BJ (cell line): ENCODE measurements at regions of chr3 and their contacts with region 1.

Region 1: DNA sequence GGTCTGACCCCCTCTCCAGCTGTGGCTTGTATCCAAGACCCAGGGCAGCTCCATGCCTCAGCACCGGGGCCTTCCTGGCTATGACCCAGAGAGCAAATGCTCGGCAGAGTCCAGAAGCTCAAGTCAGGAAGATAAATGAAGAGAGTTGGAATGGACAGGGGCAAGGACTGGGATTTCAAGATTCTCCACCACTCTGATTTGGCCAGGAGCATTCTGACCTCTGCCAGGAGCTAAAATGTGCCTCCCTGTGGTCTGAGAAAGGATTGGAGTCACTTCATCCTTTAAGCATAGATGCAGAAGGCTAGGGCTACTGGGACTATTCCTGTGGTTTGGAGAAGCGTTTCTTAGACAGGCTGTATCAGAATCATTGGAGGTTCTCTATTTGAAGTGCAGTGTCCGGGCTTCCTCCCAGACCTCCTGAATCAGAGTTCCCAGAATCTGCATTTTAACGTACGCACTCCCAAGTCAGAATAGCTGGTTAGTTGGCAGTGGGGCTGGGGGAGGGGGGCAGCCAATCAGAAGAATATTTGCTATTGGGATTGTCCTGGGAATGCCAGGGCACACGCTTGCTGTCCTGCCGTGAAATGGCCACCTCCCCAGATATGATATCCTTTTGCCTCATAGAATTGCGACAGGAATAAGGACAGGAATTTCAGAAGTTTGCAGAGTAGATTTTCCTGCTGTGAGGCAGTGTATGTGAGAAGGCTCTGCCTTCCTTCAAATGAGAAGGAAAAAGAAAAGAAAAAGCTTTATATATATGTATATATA is 57.4 kb downstream of the HRH1 start:
- DNase-seq: no peak
- H3K4me3 ChIP-seq: no peak overlapping the region
- H3K27me3 ChIP-seq: no peaks in the 10 kb centered on the region
- CTCF ChIP-seq: peak; percentile 17; the same call in 1 of the 2 replicates

Region 2: DNA sequence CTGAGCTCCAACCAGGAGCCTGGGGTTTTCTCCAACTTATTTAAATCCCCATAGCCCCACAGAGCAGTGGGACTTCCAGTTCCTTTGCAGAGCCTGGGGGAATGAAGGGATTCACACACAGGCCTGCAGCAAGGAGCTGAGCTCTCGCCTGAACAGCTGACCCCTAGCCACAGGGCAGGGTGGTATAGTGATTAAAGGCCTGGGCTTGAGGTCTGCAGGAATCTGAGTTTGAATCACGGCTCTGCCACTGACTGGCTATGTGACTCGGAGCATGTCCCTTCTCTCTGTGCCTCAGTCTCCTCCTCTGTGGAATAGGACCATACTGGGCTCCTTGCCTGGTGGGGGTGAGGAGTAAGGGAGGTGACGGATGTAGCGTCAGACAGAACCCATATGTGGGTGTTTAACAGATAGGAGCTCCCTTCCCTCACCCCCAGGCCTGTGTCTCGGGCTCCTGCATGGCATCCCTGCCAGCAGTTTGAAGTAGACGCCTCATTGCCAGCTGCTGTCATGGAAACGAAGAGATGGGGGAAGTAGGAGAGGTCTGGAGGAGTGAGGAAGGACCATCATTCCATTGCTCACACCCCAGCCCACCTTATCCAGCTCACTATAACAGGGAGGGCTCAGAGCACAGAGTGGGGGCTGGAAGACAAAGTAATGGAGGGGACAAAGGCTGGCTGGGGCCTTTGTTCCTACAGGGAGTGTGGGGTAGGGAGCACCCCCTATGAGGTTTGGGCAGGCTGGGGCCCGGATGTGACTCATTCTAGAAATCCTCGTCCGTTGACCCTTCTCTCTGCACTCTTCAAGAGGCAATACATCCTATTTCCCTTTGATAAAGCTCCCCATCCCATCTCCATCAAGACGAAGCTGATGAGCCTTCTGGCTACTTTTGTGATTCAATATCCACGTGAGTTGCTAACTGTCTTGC is 42.6 kb before region 1 on chr3:
- CTCF ChIA-PET with region 1: no interaction called
- POLR2A ChIA-PET with region 1: no interaction called
- DNase-seq: no peak
- H3K4me3 ChIP-seq: no peak overlapping the region
- H3K27me3 ChIP-seq: no peaks in the 10 kb centered on the region
- CTCF ChIP-seq: no peak

Region 3: DNA sequence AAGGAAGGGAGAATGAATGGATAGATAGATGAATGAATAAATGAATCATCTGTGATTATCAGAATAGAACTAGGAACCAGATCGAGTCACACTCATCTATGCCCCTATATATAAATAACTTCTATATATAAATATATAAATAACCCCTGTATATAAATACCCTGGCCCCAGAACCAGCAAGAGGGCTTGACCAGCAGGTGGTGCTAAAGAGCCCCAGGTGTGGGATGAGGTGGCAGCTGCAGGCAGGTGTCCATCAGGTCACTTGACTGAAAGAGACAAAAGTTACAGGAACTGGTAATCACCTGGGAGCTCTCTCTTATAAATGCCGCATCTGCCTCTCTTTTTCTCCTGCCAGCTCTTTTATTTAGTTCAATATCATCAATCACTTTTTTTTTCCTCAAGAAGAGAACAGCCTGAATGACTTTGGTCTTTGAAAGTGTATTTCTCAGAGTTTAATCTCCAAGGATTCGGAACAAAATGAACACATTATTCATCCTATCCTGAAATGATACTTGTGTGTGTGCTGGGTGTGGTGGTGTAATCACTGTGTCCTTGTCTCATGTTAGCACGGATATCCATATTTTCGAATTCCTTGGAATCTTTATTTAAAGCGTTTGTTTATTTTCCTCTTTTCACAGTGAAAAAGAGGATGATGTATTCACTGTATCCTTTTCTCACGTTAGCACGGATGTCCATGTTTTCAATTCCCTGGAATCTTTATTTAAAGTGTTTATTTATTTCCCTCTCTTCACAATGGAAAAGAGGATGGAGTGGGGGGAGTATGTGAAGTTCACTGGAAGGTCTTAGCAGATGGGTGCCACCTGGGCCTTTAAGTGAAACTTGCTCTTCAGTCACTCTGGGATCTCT is 25.1 kb after region 1 on chr3:
- CTCF ChIA-PET with region 1: interaction called, 10 read pairs
- POLR2A ChIA-PET with region 1: no interaction called
- DNase-seq: peak; percentile 71
- H3K4me3 ChIP-seq: no peak overlapping the region
- H3K27me3 ChIP-seq: no peaks in the 10 kb centered on the region
- CTCF ChIP-seq: peak; percentile 71

Region 4: GRCh38 chr3:11260460-11260859 is 48.7 kb after region 1 on chr3:
- CTCF ChIA-PET with region 1: no interaction called
- POLR2A ChIA-PET with region 1: no interaction called
- DNase-seq: no peak
- H3K4me3 ChIP-seq: no peak overlapping the region
- H3K27me3 ChIP-seq: no peaks in the 10 kb centered on the region
- CTCF ChIP-seq: no peak